HAP-1 (cell line): ENCODE measurements at regions of chr7 and their contacts with region 1.

Region 1: GRCh38 chr7:30412810-30413504 is 65.6 kb downstream of the NOD1 start:
- DNase-seq: peak; percentile 65 to 81
- H3K4me3 ChIP-seq: no peak overlapping the region
- H3K4me1 ChIP-seq: no peaks in the 10 kb centered on the region
- H3K27me3 ChIP-seq: no peaks in the 10 kb centered on the region

Region 2: DNA sequence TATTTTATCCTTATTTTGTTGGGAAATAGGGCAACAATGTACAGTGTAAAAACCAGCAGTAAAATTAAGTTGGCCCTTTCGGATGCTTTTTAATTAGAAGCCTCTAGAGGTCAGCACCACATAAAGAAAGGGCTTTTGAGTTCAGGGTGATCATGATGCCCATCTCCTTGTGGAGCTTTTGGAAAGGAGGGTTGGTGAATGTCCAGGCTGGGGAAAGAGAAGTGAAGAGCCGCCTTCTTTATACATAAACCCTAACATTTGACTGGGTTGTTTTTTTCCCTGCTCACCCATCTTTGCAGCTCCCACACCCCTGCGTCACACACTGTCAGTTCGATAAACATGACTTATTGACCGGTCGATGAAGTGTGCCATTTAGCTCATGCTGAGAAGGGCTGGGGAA is 248.4 kb before region 1 on chr7:
- in situ Hi-C with region 1: loop called (anchors 25 kb)
- DNase-seq: peak; percentile 35 to 74
- H3K4me3 ChIP-seq: no peak overlapping the region
- H3K4me1 ChIP-seq: peaks cover 29% of the 10 kb centered on the region
- H3K27me3 ChIP-seq: no peaks in the 10 kb centered on the region

Region 3: GRCh38 chr7:30225863-30226613 is 186.9 kb before region 1 on chr7:
- in situ Hi-C with region 1: no loop called
- DNase-seq: no peak
- H3K4me3 ChIP-seq: no peak overlapping the region
- H3K4me1 ChIP-seq: no peaks in the 10 kb centered on the region
- H3K27me3 ChIP-seq: no peaks in the 10 kb centered on the region

Region 4: GRCh38 chr7:30284298-30285066 is 128.5 kb before region 1 on chr7 and contains the start of gene ZNRF2:
- in situ Hi-C with region 1: loop called (anchors 5 kb)
- DNase-seq: peak; percentile 99 to 100
- H3K4me3 ChIP-seq: peak within 1 kb of the TSS; percentile 75
- H3K4me1 ChIP-seq: peaks cover 9% of the 10 kb centered on the region
- H3K27me3 ChIP-seq: no peaks in the 10 kb centered on the region

Region 5: GRCh38 chr7:30625283-30625682 is 212.3 kb after region 1 on chr7:
- in situ Hi-C with region 1: no loop called
- DNase-seq: no peak
- H3K4me3 ChIP-seq: no peak overlapping the region
- H3K4me1 ChIP-seq: no peaks in the 10 kb centered on the region
- H3K27me3 ChIP-seq: no peaks in the 10 kb centered on the region